ENCODE measurements at regions of chr10 and their contacts with region 1.

Region 1: DNA sequence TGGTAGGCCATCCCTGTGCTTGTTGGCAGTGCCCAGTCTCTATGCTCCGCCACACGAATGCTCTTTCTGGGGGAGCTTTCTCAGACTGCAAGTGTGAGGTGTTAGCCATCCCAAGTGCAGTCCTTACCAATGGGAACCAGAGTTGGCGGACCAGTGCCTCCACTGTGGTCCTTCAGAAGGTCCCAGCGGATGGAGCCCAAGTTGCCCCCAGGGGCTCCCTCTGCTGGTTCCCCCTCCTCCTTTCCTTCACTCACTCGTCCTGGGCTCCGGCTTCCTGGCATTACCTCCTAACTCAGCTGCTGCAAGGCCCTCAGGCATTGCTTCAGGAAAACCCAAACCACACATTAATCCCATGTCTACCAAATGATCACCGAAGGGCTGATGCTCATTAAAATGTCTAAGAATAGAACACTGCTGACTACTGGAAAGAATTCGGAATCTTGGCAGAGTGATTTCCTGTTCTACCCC is 139.8 kb downstream of the CUBN start:
- DNase-seq: no peak
- ATAC-seq: no peak
- H3K4me3 ChIP-seq: no peak overlapping the region
- H3K27ac ChIP-seq: peak overlapping the region in 1 of 2 donors; percentile 5
- H3K4me1 ChIP-seq: peaks cover 4% of the 10 kb centered on the region in 2 donors
- H3K27me3 ChIP-seq: no peaks in the 10 kb centered on the region

Region 2: DNA sequence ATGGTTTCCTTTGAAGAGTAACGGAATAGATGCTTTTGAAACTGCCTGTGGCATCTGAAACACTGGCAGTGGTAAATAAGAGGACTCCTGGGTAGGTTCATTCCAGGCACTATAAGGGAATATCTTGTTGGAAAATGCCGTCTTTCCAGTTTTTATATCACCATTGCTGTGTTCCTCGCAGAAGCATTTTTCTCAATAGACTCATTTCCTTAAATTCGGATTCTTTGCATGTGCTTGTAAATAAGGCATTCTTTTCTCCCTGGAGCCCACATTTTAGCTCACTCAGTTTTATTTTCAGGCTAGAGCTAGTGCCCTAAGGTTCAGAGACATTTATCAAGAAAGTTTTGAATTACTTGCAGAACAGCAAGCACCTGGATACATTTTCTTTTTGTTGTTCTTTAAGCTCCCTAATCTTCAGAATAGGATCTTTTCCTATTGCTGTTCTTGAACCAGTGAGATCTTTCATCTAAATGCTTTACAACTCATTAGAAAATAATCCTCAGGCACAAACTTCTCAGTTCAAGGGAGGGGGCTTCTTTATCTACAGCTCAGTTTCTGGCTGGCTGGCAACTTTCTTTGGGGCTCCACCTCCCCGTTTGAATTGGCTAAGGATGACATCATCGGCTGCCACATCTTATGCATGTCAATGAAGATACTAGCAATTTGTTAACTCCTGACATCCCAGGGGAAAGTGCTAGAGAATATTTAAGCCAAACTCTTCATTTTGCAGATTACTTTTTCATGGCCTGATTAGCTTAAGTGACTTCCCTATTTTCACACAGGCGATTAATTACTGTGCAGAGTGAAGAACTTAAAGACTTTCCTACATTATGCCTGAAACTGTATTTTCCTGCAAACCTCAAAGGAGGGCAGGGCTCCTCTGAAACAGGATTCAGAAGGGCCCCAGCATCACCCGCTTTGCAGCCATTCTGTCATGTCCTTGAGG is 38.9 kb before region 1 on chr10:
- intact Hi-C with region 1: loop called (anchors 5 to 10 kb)
- DNase-seq: no peak
- ATAC-seq: no peak
- H3K4me3 ChIP-seq: no peak overlapping the region
- H3K27ac ChIP-seq: no peak overlapping the region
- H3K4me1 ChIP-seq: no peaks in the 10 kb centered on the region
- H3K27me3 ChIP-seq: no peaks in the 10 kb centered on the region

Region 3: DNA sequence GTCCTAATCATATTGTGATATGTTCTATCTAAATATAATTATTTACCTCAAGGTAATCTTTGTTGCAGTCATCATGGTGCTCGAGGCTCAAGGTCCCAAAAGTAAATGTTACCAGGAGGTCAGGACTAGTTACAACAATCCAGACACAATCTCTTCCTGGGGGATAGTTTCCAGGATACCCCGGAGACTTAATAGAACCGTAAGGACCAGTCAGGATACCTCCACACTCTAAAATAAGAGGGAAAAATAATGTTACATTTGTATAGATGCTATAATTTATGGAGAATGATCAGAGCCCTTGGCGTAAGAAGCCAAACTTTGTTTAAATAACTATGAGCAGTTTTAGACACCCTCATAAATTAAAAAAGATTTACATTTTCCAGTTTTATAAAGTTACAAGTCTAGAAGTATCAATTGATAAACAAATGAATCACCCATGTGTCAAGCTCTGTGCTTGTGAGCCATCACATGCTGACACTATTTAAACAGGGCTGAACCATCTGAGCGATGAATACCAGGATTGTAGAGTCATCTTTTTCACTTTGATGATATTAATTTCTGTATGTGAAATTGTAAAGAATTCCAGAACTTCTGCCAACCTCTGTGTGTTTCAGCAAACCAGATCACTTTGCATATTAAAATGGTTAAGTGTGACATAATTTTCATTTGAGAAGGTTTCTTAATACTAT is 98.4 kb after region 1 on chr10:
- intact Hi-C with region 1: no loop called
- DNase-seq: no peak
- ATAC-seq: no peak
- H3K4me3 ChIP-seq: no peak overlapping the region
- H3K27ac ChIP-seq: no peak overlapping the region
- H3K4me1 ChIP-seq: peaks cover 0 to under 1% of the 10 kb centered on the region in 2 donors
- H3K27me3 ChIP-seq: no peaks in the 10 kb centered on the region